ENCODE measurements at regions of chr11 and their contacts with region 1.

Region 1: GRCh38 chr11:119421941-119422808 is 797 bp downstream of the THY1 start:
- DNase-seq: no peak
- ATAC-seq: peak; percentile 68
- H3K4me3 ChIP-seq: peak overlapping the region; percentile 51 to 55
- H3K27ac ChIP-seq: no peak overlapping the region
- H3K4me1 ChIP-seq: peaks cover 12% of the 10 kb centered on the region; the same call in 1 of the 2 replicates
- H3K27me3 ChIP-seq: peaks cover 5% of the 10 kb centered on the region
- CTCF ChIP-seq: no peak

Region 2: GRCh38 chr11:118975771-118976709 is 446.1 kb before region 1 on chr11:
- CTCF ChIA-PET with region 1: no interaction called
- POLR2A ChIA-PET with region 1: no interaction called
- in situ Hi-C with region 1: no loop called
- intact Hi-C with region 1: no loop called
- DNase-seq: no peak
- ATAC-seq: no peak
- H3K4me3 ChIP-seq: no peak overlapping the region
- H3K27ac ChIP-seq: no peak overlapping the region
- H3K4me1 ChIP-seq: no peaks in the 10 kb centered on the region
- H3K27me3 ChIP-seq: no peaks in the 10 kb centered on the region
- CTCF ChIP-seq: no peak

Region 3: DNA sequence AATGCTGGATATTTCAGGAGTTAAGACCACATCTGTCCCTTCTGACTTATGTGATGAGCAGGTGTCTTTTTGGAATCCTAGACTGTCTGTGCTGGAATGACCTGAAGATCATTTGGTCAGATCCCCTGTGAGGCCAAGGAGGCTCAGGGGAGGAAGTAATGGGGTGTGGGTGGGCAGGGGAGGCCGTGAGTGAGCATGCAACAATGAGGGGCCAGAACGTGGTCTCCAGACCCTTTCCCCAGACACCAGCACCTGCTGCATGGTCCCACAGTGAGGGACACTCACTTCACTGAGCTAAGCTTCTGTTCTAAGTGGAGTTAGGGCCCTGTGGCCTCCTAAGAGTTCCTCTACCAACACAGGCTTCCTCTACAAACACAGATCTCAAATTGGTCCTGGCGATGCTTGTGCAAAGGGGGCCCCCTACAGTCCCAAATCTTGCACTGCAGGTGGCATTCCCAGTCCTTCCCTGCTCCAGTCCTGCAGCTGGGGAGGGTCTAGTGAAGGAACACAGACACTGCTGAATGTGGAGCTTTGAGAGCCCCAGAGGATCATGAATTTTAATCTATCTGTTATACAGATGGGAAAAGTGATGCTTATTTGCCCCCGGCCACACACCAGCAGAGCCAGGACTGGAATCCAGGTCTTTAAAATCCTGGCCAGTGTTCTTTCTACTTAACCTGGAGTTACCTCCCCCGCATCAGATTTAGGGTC is 48.1 kb before region 1 on chr11:
- CTCF ChIA-PET with region 1: no interaction called
- POLR2A ChIA-PET with region 1: interaction called, 17 read pairs
- in situ Hi-C with region 1: no loop called
- intact Hi-C with region 1: no loop called
- DNase-seq: peak; percentile 55
- ATAC-seq: peak; percentile 83
- H3K4me3 ChIP-seq: no peak overlapping the region
- H3K27ac ChIP-seq: no peak overlapping the region
- H3K4me1 ChIP-seq: peaks cover 13% of the 10 kb centered on the region
- H3K27me3 ChIP-seq: no peaks in the 10 kb centered on the region
- CTCF ChIP-seq: peak; percentile 98

Region 4: GRCh38 chr11:119403021-119403420 is 19.2 kb before region 1 on chr11:
- CTCF ChIA-PET with region 1: interaction called, 13 read pairs
- POLR2A ChIA-PET with region 1: no interaction called
- in situ Hi-C with region 1: no loop called
- intact Hi-C with region 1: no loop called
- DNase-seq: no peak
- ATAC-seq: no peak
- H3K4me3 ChIP-seq: no peak overlapping the region
- H3K27ac ChIP-seq: no peak overlapping the region
- H3K4me1 ChIP-seq: no peaks in the 10 kb centered on the region; the same call in 1 of the 2 replicates
- H3K27me3 ChIP-seq: no peaks in the 10 kb centered on the region
- CTCF ChIP-seq: no peak

Region 5: GRCh38 chr11:119540370-119541125 is 118.4 kb after region 1 on chr11:
- CTCF ChIA-PET with region 1: no interaction called
- POLR2A ChIA-PET with region 1: no interaction called
- in situ Hi-C with region 1: no loop called
- intact Hi-C with region 1: no loop called
- DNase-seq: no peak
- ATAC-seq: no peak
- H3K4me3 ChIP-seq: no peak overlapping the region
- H3K27ac ChIP-seq: no peak overlapping the region
- H3K4me1 ChIP-seq: no peaks in the 10 kb centered on the region
- H3K27me3 ChIP-seq: no peaks in the 10 kb centered on the region
- CTCF ChIP-seq: no peak